Heart left ventricle (tissue), 16 donors: ENCODE measurements at regions of chr17 and their contacts with region 1.

Region 1: DNA sequence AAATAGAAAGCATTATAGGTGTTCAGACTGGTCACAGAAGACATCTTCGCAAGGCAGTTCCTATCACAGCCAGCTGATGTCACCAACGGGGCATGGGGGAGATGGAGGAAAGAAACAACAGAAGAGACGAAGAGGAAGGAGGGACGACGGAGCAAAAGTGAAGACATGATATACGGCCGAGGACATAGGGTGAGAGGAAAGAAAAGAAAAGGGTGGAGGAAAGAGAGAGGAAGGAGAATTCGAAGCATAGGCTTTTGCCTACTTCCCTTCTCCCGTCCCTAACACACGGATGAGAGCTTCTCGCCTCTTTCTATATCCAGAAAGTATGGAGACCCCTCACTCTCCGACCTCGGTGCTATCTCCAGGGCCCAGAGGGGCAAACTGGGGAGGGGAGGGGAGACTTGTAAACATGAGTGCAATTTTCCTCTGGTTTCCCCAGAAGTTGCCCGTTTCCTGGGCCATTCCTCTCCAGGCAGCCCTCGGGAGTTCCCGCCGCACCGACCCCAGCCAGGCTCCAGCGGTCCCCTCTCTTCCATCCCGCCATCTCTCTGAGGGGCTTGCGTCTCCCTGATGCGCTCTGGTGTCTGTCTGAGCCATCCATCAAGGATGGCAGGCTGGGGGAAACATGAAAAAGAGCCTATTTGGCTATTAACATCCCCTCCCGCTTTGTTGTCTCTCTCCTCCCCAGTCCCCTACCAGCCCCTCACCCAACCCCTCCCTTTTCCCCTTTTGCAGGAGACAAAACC is 26.0 kb downstream of the COPZ2 start:
- DNase-seq: peak in 1 of 5 donors; percentile 24
- ATAC-seq: peak in 1 of 4 donors; percentile 37
- H3K4me3 ChIP-seq: peak overlapping the region in 11 of 12 donors; percentile 18 to 52 (median 39)
- H3K27ac ChIP-seq: no peak overlapping the region
- H3K4me1 ChIP-seq: peaks cover 0 to 17% (median 7%) of the 10 kb centered on the region in 12 donors
- H3K27me3 ChIP-seq: peaks cover 0 to 51% (median 20%) of the 10 kb centered on the region in 9 donors
- CTCF ChIP-seq: peak in 7 of 12 donors; percentile 5 to 41 (median 16)
- POLR2A ChIP-seq: no peak

Region 2: GRCh38 chr17:47889734-47890529 is 121.6 kb before region 1 on chr17:
- intact Hi-C with region 1: loop called in 1 of 10 experiments (anchors 2 kb)
- DNase-seq: peak; percentile 84 to 92 (median 87)
- ATAC-seq: peak; percentile 74 to 93 (median 92)
- H3K4me3 ChIP-seq: no peak overlapping the region
- H3K27ac ChIP-seq: no peak overlapping the region
- H3K4me1 ChIP-seq: peaks cover 0 to 16% (median 8%) of the 10 kb centered on the region in 12 donors
- H3K27me3 ChIP-seq: no peaks in the 10 kb centered on the region
- CTCF ChIP-seq: peak; percentile 89 to 99 (median 96)
- POLR2A ChIP-seq: no peak

Region 3: DNA sequence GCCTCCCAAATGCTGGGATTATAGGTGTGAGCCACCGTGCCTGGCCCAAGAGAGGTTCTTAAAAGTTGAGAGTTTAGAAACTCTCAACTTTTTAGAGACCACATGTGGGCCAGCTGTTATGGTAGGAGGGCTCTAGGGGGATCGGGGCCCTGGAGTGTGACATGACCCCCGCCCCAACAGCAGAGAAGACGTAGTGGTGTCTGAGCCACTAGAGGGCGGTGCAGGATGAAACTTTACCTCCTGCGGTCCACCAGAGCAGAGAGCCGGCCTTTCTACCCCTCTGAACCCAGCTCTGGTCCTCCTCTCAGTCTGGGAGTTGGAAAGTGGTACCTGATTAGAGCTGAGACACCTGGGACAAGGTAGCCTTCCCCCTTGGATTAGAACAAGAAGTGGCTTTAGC is 33.3 kb before region 1 on chr17:
- intact Hi-C with region 1: loop called in 1 of 10 experiments (anchors 2 kb)
- DNase-seq: peak in 4 of 5 donors; percentile 49 to 62 (median 56)
- ATAC-seq: peak in 3 of 4 donors; percentile 68 to 80 (median 77)
- H3K4me3 ChIP-seq: no peak overlapping the region
- H3K27ac ChIP-seq: no peak overlapping the region
- H3K4me1 ChIP-seq: peaks cover 0 to 30% (median 4%) of the 10 kb centered on the region in 12 donors
- H3K27me3 ChIP-seq: no peaks in the 10 kb centered on the region
- CTCF ChIP-seq: peak; percentile 56 to 76 (median 63)
- POLR2A ChIP-seq: no peak

Region 4: DNA sequence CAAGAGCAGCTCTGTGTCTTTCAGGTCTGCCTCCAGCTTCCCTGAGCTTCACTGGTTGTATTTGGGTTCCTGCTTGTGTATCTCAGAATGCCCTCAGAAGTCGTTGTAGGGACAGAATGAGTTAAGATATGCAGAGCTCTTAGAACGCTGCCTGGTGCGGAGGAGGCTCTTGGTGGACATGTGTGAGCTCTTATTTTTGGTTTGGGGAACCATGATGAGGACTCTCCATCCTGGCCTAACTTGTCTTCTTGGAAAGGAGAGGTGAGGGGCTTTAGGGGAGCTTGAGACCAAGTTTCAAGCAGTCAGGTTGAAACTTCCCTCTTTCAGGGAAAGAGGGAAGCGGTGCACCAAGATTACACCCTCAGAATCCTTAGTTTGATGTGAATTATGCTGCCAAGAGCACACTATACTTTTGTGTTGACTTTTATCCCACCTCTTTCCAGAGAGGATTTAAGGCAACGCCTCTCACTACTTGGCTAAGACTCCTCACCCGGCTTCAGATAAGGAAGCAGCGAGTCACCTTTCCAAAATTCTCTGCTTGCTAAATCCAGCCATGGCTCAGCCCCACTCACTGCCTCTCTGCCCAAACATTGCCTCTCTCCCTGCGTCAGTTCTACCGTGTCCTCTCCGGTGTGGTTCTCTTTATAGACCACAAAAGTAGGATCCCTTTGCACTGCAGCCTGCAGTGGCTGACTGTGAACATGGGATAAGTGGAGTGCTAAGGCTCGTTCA is 27.9 kb before region 1 on chr17:
- intact Hi-C with region 1: loop called in 2 of 10 experiments (anchors 2 kb)
- DNase-seq: peak in 3 of 5 donors; percentile 36 to 52 (median 40)
- ATAC-seq: peak; percentile 65 to 82 (median 80)
- H3K4me3 ChIP-seq: no peak overlapping the region
- H3K27ac ChIP-seq: peak overlapping the region in 10 of 12 donors; percentile 22 to 66 (median 52)
- H3K4me1 ChIP-seq: peaks cover 0 to 39% (median 21%) of the 10 kb centered on the region in 12 donors
- H3K27me3 ChIP-seq: no peaks in the 10 kb centered on the region
- CTCF ChIP-seq: no peak
- POLR2A ChIP-seq: no peak